ENCODE measurements at regions of chr1 and their contacts with region 1.

Region 1: DNA sequence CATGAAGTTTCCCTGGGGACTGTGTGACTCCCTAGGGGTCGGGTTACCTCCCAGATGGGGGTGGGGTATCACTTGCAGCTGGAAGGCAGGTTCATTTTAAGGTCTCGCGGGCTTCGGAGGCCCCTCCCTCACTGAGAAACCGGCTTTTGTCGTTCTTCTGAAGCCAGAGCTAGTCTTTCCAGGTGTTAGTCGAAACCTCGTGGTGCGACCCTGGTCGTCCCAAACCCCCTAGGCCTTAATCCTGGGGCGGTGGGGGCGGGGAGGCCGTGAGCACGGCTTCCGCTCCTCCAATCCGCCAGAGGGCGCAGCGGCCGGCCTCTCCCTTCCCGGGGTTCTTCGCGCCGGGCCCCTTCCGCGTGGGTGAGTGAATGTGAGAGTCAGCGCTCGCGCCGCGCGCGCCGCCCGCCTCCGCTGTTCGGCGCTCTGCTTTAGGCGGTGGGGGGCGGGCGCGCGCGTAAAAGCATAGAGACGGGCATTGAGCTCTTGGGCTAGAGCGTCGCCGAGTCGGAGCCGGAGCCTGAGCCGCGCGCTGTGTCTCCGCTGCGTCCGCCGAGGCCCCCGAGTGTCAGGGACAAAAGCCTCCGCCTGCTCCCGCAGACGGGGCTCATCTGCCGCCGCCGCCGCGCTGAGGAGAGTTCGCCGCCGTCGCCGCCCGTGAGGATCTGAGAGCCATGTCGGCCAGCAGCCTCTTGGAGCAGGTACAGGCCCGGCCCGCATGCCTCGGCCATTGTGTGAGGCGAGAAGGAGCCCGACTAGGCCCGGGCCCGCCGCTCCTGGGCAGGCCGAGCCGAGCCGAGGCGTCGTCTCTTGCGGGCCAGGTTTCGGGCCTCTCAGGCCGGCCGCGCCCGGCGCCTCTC is at the start of gene YTHDF2:
- DNase-seq: peak; percentile 97
- H3K4me3 Mint-ChIP-seq: peak within 1 kb of the TSS; percentile 96
- H3K27ac Mint-ChIP-seq: peak within 1 kb of the TSS; percentile 98
- H3K4me1 Mint-ChIP-seq: peaks cover 8% of the 10 kb centered on the region
- H3K27me3 Mint-ChIP-seq: no peaks in the 10 kb centered on the region
- CTCF ChIP-seq: peak; percentile 93
- total RNA-seq, gene YTHDF2: 102 and 127 TPM in 2 replicates

Region 2: DNA sequence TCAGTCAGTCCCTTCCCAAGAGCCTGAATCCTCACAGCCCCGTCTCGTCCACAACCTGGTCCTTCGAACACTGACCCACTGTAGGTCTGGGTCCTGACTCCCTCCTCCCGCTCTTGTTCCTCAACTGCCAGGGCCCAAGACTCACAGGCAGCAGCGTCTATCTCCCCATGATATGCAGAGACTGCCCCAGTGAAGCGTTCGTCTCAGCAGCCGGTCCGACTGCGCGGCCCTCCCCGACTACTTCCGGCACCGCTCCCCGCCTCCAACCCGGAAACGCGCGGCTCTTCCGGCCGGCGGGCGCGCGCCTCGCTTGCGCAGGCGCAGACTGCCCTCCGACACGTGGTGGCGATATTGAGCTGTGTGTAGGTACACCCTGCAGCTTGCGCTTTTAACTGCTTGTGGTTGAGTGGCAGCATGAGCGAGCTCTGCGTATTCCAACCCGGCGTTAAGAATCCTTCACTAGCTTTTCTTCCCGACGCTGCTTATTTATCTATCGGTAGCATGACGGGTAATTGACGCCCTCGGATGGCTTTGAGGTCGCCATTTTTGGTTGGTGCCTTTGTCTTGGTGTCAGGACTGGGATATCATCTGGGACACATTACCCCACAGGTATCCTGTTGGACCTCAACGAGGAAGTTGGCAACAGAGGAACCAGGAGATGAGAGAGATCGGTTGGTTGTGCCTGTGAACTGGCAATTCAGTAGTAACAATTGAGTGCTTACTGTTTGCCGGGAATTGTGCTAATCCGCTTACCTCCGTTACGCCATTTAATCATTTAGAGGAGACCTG is 93.6 kb before region 1 on chr1 and contains the start of gene TAF12:
- CTCF ChIA-PET with region 1: interaction called, 3 read pairs
- POLR2A ChIA-PET with region 1: interaction called, 95 read pairs
- intact Hi-C with region 1: loop called (anchors 1 kb)
- DNase-seq: peak; percentile 95
- H3K4me3 Mint-ChIP-seq: peak within 1 kb of the TSS; percentile 100
- H3K27ac Mint-ChIP-seq: peak within 1 kb of the TSS; percentile 98
- H3K4me1 Mint-ChIP-seq: peaks cover 18% of the 10 kb centered on the region
- H3K27me3 Mint-ChIP-seq: no peaks in the 10 kb centered on the region
- CTCF ChIP-seq: peak; percentile 31
- total RNA-seq, gene TAF12: 29.7 and 40.9 TPM in 2 replicates

Region 3: GRCh38 chr1:28648474-28649198 is 88.0 kb before region 1 on chr1 and contains the start of gene RNU11:
- CTCF ChIA-PET with region 1: interaction called, 3 read pairs
- POLR2A ChIA-PET with region 1: interaction called, 95 read pairs
- intact Hi-C with region 1: loop called (anchors 1 kb)
- DNase-seq: peak; percentile 97
- H3K4me3 Mint-ChIP-seq: peak within 1 kb of the TSS; percentile 77
- H3K27ac Mint-ChIP-seq: peak within 1 kb of the TSS; percentile 100
- H3K4me1 Mint-ChIP-seq: peaks cover 25% of the 10 kb centered on the region
- H3K27me3 Mint-ChIP-seq: no peaks in the 10 kb centered on the region
- CTCF ChIP-seq: no peak
- total RNA-seq, gene RNU11: not detected in 2 replicates

Region 4: GRCh38 chr1:28668191-28668955 is 68.3 kb before region 1 on chr1 and contains the start of gene GMEB1:
- CTCF ChIA-PET with region 1: interaction called, 7 read pairs
- POLR2A ChIA-PET with region 1: interaction called, 54 read pairs
- intact Hi-C with region 1: no loop called
- DNase-seq: peak; percentile 88
- H3K4me3 Mint-ChIP-seq: peak within 1 kb of the TSS; percentile 87
- H3K27ac Mint-ChIP-seq: peak within 1 kb of the TSS; percentile 90
- H3K4me1 Mint-ChIP-seq: peaks cover 13% of the 10 kb centered on the region
- H3K27me3 Mint-ChIP-seq: no peaks in the 10 kb centered on the region
- CTCF ChIP-seq: no peak
- total RNA-seq, gene GMEB1: 9.1 and 13.3 TPM in 2 replicates

Region 5: DNA sequence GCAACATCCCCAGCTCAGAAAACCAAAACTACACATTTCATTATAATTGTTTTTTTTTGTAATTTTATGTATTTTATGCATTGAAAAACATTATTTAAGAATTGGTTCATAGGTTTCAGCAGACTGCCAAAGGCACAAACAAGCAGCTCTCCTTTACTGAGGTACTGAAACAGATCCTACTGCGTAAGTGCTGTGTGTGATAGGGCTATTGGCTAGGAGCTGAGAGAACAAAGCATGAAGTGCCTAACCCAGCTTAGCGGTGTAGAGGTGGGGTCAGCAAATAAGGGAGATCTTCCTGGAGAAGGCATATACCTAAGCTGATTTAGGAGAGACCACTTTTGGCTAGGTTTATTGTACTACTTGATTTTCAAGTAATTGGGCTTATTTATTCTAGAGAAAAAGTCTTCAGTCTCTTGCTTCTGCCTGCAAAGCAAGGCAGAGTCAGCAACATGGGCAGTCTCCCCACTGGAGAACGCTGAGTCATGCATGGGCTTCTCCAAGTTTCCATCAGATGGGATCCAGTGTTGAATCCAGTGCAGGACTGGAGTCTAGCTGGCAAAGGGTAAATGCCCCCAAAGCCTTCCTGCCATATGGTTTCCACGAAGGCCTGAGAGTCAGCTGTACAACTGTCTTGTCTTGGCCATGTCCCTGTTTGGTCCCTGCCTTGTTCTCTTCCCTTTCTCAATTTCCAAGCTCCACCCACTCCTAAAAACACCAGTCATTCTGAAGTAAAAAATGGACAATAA is 17.9 kb before region 1 on chr1:
- CTCF ChIA-PET with region 1: interaction called, 6 read pairs
- POLR2A ChIA-PET with region 1: interaction called, 14 read pairs
- intact Hi-C with region 1: no loop called
- DNase-seq: peak; percentile 17
- H3K4me3 Mint-ChIP-seq: no peak overlapping the region
- H3K27ac Mint-ChIP-seq: no peak overlapping the region
- H3K4me1 Mint-ChIP-seq: no peaks in the 10 kb centered on the region
- H3K27me3 Mint-ChIP-seq: no peaks in the 10 kb centered on the region
- CTCF ChIP-seq: no peak

Region 6: DNA sequence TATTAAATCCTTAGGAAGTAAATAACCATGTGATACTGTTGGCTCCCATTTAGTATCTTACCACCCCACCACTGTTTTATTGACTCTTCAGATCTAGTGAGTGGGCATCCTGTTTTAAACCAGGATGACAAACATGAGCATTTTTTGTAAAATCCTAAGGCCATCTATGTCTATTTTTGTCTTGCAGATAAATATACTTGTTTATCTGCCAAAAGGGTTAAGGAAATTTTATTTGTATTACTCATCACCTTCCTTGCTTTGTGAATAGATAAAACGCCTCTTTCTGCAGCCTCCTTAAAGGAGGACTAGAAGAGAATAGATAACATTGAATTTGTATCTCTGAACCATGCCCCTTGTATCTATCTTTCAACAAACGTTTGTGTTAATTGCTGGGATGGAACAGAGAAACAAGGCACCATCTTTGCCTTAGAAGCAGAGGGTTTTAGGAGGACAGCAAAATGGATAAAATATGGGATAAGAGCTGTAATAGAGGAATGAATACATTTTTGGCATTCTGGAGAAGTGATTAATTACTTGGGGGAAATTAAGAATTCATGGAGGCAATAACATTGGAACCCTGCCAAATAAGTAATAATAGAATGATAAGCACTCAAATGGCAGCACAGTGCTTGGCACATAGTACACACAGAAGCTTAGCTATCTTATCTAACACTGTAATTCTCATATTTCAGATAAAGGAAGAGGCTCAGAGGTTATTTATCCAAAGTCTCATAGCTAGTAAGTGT is 14.8 kb after region 1 on chr1:
- CTCF ChIA-PET with region 1: interaction called, 8 read pairs
- POLR2A ChIA-PET with region 1: interaction called, 31 read pairs
- intact Hi-C with region 1: no loop called
- DNase-seq: no peak
- H3K4me3 Mint-ChIP-seq: no peak overlapping the region
- H3K27ac Mint-ChIP-seq: no peak overlapping the region
- H3K4me1 Mint-ChIP-seq: peaks cover 34% of the 10 kb centered on the region
- H3K27me3 Mint-ChIP-seq: no peaks in the 10 kb centered on the region
- CTCF ChIP-seq: no peak

Region 7: GRCh38 chr1:28756846-28757245 is 20.2 kb after region 1 on chr1:
- CTCF ChIA-PET with region 1: interaction called, 8 read pairs
- POLR2A ChIA-PET with region 1: interaction called, 31 read pairs
- intact Hi-C with region 1: no loop called
- DNase-seq: peak; percentile 22
- H3K4me3 Mint-ChIP-seq: no peak overlapping the region
- H3K27ac Mint-ChIP-seq: no peak overlapping the region
- H3K4me1 Mint-ChIP-seq: peaks cover 24% of the 10 kb centered on the region
- H3K27me3 Mint-ChIP-seq: no peaks in the 10 kb centered on the region
- CTCF ChIP-seq: no peak

Region 8: DNA sequence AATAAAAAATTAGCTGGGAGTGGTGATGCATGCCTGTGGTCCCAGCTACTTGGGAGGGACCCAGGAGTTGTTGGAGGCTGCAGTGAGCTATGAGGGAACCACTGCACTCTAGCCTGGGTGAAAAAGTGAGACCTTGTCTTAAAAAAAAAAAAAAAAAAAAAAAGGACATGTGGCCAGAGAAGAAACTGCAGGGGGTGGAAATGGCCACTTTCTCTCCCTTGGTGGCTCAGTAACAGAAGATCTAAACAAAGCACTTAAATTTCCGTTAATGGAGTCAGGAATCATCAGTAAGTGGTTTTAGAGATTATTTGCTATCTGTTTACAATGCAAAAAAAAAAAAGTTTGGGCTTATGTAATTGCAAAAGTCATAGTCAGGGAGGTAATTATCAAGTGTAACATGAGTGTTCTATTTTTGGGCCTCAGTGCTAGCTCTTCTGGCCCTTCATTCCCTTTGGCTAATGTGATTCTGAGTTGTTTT is 56.0 kb after region 1 on chr1:
- CTCF ChIA-PET with region 1: no interaction called
- POLR2A ChIA-PET with region 1: no interaction called
- intact Hi-C with region 1: no loop called
- DNase-seq: no peak
- H3K4me3 Mint-ChIP-seq: no peak overlapping the region
- H3K27ac Mint-ChIP-seq: no peak overlapping the region
- H3K4me1 Mint-ChIP-seq: peaks cover 6% of the 10 kb centered on the region
- H3K27me3 Mint-ChIP-seq: peaks cover 11% of the 10 kb centered on the region
- CTCF ChIP-seq: no peak

Measured in MCF 10A (cell line).